Motor neuron (in vitro differentiated cells): ENCODE measurements at regions of chrX and their contacts with region 1.

Region 1: GRCh38 chrX:129905787-129906580 is at the start of gene UTP14A:
- ATAC-seq: peak; percentile 96 to 99 (median 98)
- H3K4me3 ChIP-seq: peak within 1 kb of the TSS; percentile 52 to 93 (median 89)
- H3K27ac ChIP-seq: peak within 1 kb of the TSS; percentile 85 to 92
- H3K4me1 ChIP-seq: no peaks in the 10 kb centered on the region
- total RNA-seq, gene UTP14A: 10.2 to 38.1 (median 19.7) TPM

Region 2: GRCh38 chrX:130060122-130061069 is 154.4 kb after region 1 on chrX:
- in situ Hi-C with region 1: loop called in 1 of 9 experiments (anchors 25 kb)
- ATAC-seq: peak; percentile 87 to 94 (median 90)
- H3K4me3 ChIP-seq: peak overlapping the region; percentile 49 to 75 (median 65)
- H3K27ac ChIP-seq: no peak overlapping the region
- H3K4me1 ChIP-seq: peaks cover 0 to 3% of the 10 kb centered on the region in 2 donors

Region 3: DNA sequence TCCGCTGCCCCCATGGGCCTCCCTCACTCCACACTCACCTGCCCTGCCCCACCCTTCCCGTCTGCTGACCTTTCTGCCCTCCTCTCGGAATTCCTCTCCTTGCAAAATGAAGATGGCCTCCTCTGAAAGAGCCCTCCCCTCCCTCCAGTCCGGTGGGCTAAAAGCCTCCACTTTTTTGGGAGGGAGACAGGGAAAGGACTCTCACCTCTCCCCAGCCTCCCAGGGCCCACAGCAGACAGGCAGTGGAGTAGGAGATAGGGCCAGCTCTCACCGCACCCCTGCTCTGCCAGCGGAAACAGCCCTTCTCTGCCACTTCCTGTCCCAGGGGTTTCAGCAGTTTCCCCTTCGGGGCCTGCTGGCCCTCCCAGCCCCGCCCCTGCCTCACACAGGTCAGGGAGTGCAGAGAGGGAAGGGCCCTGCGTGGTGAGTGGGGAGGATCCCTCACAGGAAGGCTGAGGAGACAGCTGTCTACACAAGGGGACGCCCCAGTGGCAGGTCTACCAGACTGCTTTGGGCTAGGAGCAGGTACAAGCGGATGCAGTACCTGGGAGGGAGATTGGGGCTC is 186.1 kb after region 1 on chrX:
- in situ Hi-C with region 1: no loop called
- ATAC-seq: peak in 5 of 8 experiments; percentile 46 to 82 (median 62)
- H3K4me3 ChIP-seq: no peak overlapping the region
- H3K27ac ChIP-seq: no peak overlapping the region
- H3K4me1 ChIP-seq: peaks cover 0 to 4% of the 10 kb centered on the region in 2 donors

Region 4: DNA sequence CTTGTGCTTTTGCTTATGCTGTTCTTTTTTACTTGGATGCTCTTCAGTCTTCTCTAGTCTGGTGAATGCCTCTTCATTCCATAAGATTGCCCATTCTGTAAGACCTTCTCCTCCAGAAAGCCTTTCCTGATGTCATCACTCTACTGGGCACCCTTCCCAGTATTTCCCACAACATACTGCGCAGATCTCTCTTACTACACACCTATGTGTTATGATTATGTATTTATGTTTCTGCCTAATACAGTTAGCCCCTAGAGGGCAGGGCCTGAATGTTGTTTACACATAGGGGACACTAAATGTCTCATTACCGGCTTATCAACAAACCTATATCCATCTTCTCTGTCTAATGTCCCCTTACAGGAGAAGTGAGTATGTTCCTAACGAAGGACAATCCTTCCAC is 238.5 kb after region 1 on chrX:
- in situ Hi-C with region 1: no loop called
- ATAC-seq: no peak
- H3K4me3 ChIP-seq: no peak overlapping the region
- H3K27ac ChIP-seq: no peak overlapping the region
- H3K4me1 ChIP-seq: no peaks in the 10 kb centered on the region